Activated T-helper 2 cell treated with anti-CD3 and anti-CD28 coated beads, Interferon-gamma antibody, Interleukin-2, Interleukin-4, amounts not matched to agents 10 μg/mL and 5 μg/mL and 100 μg/mL, durations not matched to agents 14 hours and 24 hours and 36 hours (primary cell): ENCODE measurements at regions of chr21 and their contacts with region 1.

Region 1: DNA sequence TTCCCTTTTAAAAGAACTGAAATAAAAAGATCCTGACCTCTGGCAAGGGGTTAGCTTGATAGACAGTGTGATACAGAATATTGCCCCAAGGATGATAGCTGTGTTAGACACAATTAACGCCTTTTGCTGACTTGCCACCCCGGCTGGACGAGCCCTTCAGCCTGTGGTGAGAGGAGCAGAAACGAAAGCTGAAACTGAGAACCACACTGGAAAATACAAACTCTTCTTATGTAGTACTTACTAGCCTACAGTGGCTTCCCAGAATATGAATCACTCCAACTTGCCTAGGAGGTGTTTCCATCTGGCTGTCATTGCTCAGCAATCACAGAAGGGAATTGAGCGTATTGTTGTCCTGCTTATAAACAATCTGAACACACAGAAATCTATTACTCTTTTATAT is 22.9 kb downstream of the SAMSN1 start:
- DNase-seq: no peak
- H3K4me3 Mint-ChIP-seq: peak overlapping the region; percentile 71
- H3K27ac Mint-ChIP-seq: peak overlapping the region; percentile 91
- H3K4me1 Mint-ChIP-seq: peaks cover 52% of the 10 kb centered on the region
- H3K27me3 Mint-ChIP-seq: no peaks in the 10 kb centered on the region

Region 2: DNA sequence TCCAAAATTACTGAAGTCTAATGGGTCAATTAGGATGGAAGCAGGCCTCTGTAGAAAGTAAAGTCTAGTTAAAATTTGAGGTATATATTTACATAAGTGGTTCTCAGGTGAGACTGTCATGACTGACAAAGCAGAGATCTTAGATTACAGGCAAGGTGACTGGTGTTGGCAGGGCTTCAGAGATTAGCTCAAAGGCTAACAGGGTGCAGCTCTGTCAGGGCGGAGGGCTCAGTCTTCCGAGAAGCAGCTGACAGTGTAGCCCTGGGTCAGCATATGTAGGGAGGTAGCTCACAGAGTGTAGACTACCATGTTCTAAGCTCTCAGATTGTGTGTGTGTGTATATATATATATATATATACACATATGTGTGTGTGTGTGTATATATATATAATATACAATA is 252.6 kb before region 1 on chr21:
- intact Hi-C with region 1: no loop called
- DNase-seq: no peak
- H3K4me3 Mint-ChIP-seq: no peak overlapping the region
- H3K27ac Mint-ChIP-seq: no peak overlapping the region
- H3K4me1 Mint-ChIP-seq: no peaks in the 10 kb centered on the region
- H3K27me3 Mint-ChIP-seq: peaks cover 32% of the 10 kb centered on the region

Region 3: DNA sequence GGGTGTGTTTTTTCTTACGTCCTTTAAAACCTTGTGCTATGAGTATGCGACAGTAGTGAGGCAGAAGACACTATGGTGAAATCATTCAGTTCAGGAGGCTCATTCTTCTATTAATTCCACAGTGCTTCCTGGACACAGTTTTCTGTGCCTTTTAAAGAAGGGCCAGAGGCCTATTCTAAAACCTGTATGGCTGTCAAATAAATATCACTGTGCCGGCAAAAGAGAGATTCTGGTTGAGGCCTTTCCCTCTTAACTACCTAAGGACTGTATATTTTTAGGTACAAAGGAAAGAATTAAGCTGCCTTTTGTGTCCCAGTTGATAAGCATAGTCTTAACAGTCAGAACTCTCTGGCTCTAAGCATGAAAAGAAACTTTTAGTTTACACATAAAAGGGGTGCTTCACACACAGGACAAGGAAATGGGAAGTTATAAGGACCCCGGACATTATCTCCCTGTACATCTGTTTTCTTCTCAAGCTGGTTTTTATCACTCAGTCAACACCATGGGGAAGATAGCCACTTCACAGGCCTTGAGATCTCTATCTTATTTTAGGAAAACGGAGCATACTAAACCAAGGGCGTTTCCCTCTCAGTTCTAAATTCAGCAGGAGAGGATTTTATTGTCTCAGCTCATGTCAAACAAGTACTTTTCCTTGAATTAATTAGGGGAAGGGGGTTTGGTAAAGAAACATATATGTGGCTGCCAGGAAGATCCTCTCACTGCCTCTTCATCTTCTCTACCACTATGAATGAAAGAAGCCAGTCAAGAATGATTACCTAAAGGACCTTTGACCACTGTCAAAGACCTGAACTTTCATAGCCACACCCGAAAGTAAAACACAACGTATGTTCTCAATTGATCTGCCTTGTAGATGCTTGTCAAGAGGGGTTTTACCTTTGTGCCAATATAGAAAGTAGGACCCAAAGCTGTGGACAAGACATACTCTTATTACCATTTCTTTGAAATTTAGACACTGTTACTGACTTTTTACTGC is 68.9 kb before region 1 on chr21:
- intact Hi-C with region 1: loop called (anchors 2 kb)
- DNase-seq: no peak
- H3K4me3 Mint-ChIP-seq: no peak overlapping the region
- H3K27ac Mint-ChIP-seq: peak overlapping the region; percentile 67
- H3K4me1 Mint-ChIP-seq: peaks cover 52% of the 10 kb centered on the region
- H3K27me3 Mint-ChIP-seq: no peaks in the 10 kb centered on the region

Region 4: GRCh38 chr21:14657241-14658008 is 134.2 kb after region 1 on chr21:
- intact Hi-C with region 1: no loop called
- DNase-seq: no peak
- H3K4me3 Mint-ChIP-seq: no peak overlapping the region
- H3K27ac Mint-ChIP-seq: no peak overlapping the region
- H3K4me1 Mint-ChIP-seq: peaks cover 7% of the 10 kb centered on the region
- H3K27me3 Mint-ChIP-seq: peaks cover 3% of the 10 kb centered on the region

Region 5: DNA sequence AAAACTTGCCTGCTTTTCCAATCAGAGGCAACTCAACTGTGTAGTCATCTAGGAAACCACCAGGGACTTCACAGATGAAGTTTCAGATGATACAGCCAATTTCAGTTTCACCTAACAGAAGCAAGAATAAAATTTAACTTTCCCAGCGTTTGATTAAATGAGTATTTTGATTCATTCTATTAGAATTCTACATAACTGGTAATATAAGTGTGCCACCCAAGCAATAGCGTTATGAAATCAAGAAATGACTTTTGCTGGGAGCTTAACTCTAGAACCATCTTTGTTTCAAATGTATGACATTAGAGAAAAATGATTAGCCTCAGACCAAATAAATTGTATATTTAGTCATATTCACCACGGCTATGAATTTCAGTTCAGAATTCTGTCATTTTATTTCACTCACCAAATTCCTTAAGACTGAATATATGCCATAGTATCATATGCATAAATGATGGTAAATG is 302.3 kb after region 1 on chr21:
- intact Hi-C with region 1: loop called (anchors 10 kb)
- DNase-seq: no peak
- H3K4me3 Mint-ChIP-seq: no peak overlapping the region
- H3K27ac Mint-ChIP-seq: no peak overlapping the region
- H3K4me1 Mint-ChIP-seq: peaks cover 9% of the 10 kb centered on the region
- H3K27me3 Mint-ChIP-seq: peaks cover 1% of the 10 kb centered on the region